Psoas muscle (tissue), 8 donors: ENCODE measurements at regions of chr2 and their contacts with region 1.

Region 1: DNA sequence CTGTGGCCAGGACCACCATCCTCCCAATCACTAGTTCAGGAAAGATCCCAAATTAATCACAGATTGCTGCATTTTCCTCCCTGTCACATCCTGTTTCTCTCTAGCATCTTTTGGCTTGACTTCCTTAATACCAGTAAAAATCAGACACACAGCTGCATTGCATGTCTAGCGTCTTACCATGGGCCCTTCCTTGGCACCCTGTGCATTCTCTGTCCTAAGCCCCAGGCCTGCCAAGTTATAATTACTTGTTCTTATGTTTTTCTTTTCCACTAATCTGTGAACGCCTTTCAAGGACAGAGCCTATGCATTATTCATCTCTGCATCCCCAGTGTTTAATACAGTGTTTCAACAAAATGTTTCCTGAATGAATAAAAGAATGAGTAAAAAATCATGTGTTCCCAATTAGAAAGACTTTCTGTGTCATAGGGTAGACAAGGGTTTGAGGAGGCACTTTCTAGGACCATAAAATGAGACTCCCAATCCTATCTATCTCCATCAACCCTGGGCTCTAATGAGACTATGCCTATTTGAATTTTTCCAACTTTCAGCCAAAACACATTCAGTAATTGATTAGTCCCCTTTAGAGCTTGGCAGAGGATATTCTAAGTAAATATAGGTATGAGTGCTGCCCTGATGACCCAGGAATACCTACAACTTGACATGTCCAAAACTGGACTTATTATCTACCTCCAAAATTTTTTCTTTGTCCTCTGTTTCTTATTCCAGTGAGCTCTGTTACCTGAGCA is 10.3 kb upstream of the NT5C1B start:
- DNase-seq: no peak
- ATAC-seq: peak in 1 of 4 donors; percentile 46
- H3K4me3 ChIP-seq: no peak overlapping the region
- H3K27ac ChIP-seq: no peak overlapping the region
- H3K4me1 ChIP-seq: no peaks in the 10 kb centered on the region
- H3K27me3 ChIP-seq: no peaks in the 10 kb centered on the region
- CTCF ChIP-seq: no peak

Region 2: GRCh38 chr2:18545384-18545783 is 54.3 kb before region 1 on chr2:
- intact Hi-C with region 1: loop called in 1 of 2 experiments (anchors 2 kb)
- DNase-seq: no peak
- ATAC-seq: no peak
- H3K4me3 ChIP-seq: no peak overlapping the region
- H3K27ac ChIP-seq: no peak overlapping the region
- H3K4me1 ChIP-seq: peaks cover 11% of the 10 kb centered on the region
- H3K27me3 ChIP-seq: no peaks in the 10 kb centered on the region
- CTCF ChIP-seq: no peak

Region 3: DNA sequence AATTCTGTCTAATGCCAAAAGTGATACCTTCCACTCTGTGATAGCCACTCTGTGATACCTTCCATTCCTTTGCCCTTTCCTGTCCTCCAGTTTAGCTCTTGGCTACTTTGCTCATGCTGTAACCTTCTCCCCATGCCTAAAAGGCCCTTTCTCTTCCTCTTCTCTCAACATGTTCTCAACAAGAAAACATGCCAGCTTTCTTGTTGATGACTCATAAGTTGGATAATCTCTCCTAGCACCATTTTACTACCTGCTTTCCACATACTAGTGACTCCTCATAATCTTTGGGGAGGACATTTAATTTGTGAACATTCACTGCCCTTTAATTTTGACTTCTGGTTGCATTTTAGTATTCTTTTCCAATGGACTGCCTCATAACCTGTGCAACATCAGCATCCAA is 45.6 kb after region 1 on chr2:
- intact Hi-C with region 1: no loop called
- DNase-seq: no peak
- ATAC-seq: no peak
- H3K4me3 ChIP-seq: no peak overlapping the region
- H3K27ac ChIP-seq: no peak overlapping the region
- H3K4me1 ChIP-seq: no peaks in the 10 kb centered on the region
- H3K27me3 ChIP-seq: no peaks in the 10 kb centered on the region
- CTCF ChIP-seq: no peak